ENCODE measurements at regions of chr13 and their contacts with region 1.

Region 1: DNA sequence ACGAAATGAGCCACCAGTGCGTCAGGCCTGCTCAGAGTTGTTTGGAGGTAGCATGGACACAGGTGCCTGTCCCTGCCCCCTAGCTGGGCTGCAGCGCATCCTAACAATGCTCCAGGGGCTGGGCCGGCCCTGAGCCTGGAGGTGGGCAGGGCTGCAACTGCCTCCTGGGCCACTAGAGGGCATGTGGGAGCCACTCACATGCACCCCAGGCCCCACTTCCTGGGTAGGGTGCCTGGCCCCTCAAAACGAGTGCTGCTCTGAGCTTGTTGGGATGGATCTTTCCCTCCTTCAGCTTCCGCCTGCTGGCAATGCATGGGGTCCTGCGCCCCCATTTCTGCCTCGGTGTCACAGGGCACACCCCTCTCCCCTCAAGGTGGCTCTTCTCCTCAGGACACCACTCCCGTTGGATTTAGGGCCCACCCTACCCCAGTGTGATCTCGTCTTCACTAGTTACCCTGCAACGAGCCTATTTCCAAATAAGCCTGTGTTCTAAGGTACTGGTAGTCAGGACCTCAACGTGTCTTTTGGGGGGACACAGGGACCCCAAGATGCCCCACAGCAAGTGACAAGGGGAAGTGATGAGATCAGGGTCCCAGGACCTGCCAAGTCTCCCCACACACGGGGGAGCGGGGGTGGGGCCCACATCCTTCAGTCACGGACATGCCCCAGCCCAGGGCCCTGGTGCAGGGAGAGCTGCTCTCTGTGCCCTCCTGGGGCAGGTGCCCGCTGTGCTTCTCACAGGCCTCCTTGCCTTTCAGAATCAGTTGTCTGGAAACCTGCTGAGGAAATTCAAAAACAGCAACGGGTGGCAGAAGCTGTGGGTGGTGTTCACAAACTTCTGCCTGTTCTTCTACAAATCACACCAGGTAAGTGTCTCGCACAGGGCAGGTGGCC is 131.3 kb downstream of the STK24 start:
- DNase-seq: peak; percentile 74 to 76 (median 75)
- ATAC-seq: peak; percentile 84 to 92 (median 90)
- H3K4me3 ChIP-seq: no peak overlapping the region
- H3K27ac ChIP-seq: no peak overlapping the region
- H3K4me1 ChIP-seq: no peaks in the 10 kb centered on the region
- H3K27me3 ChIP-seq: no peaks in the 10 kb centered on the region
- CTCF ChIP-seq: peak; percentile 97 to 98 (median 97)
- POLR2A ChIP-seq: no peak

Region 2: GRCh38 chr13:98033277-98034247 is 412.0 kb before region 1 on chr13:
- intact Hi-C with region 1: loop called in 1 of 2 experiments (anchors 10 kb)
- DNase-seq: peak in 1 of 3 donors; percentile 52
- ATAC-seq: peak; percentile 93 to 97 (median 94)
- H3K4me3 ChIP-seq: peak overlapping the region in 2 of 3 donors; percentile 1 to 22
- H3K27ac ChIP-seq: peak overlapping the region in 2 of 3 donors; percentile 4 to 36
- H3K4me1 ChIP-seq: peaks cover 0 to 16% (median 2%) of the 10 kb centered on the region in 4 donors
- H3K27me3 ChIP-seq: no peaks in the 10 kb centered on the region
- CTCF ChIP-seq: peak in 3 of 4 donors; percentile 25 to 41 (median 32)
- POLR2A ChIP-seq: peak; percentile 12

Region 3: DNA sequence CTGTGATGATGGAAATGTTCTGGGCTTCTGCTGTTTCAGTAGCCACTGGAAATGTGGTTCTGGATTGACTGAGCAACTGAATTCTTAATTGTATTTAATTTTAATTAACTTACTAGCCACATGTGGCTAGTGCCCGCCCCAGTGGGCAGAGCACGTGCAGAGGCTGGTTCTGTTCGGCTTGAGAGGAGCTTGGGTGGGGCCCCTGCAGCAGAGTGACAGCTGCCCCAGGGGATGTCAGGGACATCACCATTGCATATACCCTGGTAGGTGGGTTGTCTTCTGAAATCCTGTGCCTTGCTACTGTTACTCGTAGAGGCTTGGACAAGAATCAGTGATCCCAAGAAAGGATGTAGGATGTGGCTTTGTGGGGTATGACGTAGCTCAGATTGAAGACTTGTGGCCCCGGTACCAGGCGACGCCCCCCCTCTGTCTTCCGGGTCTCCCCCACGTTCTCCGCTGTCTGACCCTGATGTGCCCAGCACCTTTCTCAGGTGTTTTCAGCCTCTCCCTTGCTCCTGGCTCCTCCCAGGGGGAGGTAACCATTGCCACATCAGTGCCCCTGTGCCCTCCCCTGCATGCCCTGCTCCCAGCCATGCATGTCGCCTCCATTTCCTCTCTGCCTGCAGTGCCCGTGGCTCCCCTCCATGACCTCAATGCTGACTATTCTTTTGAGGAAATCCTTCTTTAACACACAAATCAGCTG is 166.0 kb before region 1 on chr13:
- intact Hi-C with region 1: no loop called
- DNase-seq: peak in 1 of 3 donors; percentile 28
- ATAC-seq: peak; percentile 42 to 58 (median 50)
- H3K4me3 ChIP-seq: no peak overlapping the region
- H3K27ac ChIP-seq: no peak overlapping the region
- H3K4me1 ChIP-seq: peaks cover 0 to 33% (median 10%) of the 10 kb centered on the region in 4 donors
- H3K27me3 ChIP-seq: no peaks in the 10 kb centered on the region
- CTCF ChIP-seq: no peak
- POLR2A ChIP-seq: no peak

Region 4: GRCh38 chr13:98523455-98524102 is 78.0 kb after region 1 on chr13:
- intact Hi-C with region 1: no loop called
- DNase-seq: no peak
- ATAC-seq: no peak
- H3K4me3 ChIP-seq: no peak overlapping the region
- H3K27ac ChIP-seq: no peak overlapping the region
- H3K4me1 ChIP-seq: peaks cover 0 to 29% (median 11%) of the 10 kb centered on the region in 4 donors
- H3K27me3 ChIP-seq: no peaks in the 10 kb centered on the region
- CTCF ChIP-seq: no peak
- POLR2A ChIP-seq: no peak

Region 5: DNA sequence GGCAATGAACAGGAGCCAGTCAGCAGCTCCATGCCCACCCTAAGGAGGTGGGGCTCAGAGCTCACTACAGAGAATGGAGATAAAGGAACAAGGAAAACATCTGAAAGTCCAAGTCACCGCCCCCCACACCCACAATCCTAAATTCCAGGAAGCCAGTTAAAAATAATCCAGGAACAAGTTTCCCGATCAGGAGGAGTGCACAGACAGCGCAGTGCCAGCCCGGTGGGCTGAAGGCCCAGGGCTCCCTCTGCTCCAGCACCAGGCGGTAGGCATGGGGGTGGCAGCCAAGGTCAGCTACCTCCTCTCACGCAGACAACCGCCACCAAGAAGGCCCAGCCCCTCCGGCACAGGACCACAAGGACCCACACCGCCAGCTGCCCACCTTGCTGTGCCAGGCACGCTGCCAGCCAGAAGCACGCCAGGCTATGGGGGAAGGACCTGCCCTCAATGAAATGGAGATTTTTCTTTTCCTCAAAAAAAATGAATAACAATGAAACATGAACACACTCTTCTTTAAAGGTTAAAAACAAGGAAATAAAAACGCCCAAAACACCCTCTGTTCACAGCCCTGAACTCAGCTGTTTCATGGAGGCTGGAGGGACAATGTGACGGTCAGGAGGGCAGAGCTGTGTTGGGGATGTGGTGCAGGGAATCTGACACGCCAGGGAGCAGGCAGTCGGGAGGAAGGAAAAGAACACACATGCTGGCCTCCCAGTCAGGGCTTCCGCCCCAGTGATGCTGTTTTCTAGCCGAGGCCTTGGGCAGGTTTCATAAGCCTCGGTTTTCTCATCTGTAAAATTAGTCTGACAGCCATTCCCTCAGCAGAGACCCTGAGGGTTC is 120.4 kb after region 1 on chr13:
- intact Hi-C with region 1: no loop called
- DNase-seq: peak in 2 of 3 donors; percentile 76 to 78
- ATAC-seq: peak; percentile 66 to 75 (median 74)
- H3K4me3 ChIP-seq: peak overlapping the region in 1 of 3 donors; percentile 19
- H3K27ac ChIP-seq: peak overlapping the region; percentile 60 to 82 (median 74)
- H3K4me1 ChIP-seq: peaks cover 0 to 55% (median 30%) of the 10 kb centered on the region in 4 donors
- H3K27me3 ChIP-seq: no peaks in the 10 kb centered on the region
- CTCF ChIP-seq: peak in 1 of 4 donors; percentile 17
- POLR2A ChIP-seq: peak; percentile 44

Region 6: GRCh38 chr13:98653463-98653985 is 207.9 kb after region 1 on chr13:
- intact Hi-C with region 1: loop called (anchors 10 kb)
- DNase-seq: peak; percentile 73 to 82 (median 76)
- ATAC-seq: peak; percentile 94 to 97 (median 96)
- H3K4me3 ChIP-seq: no peak overlapping the region
- H3K27ac ChIP-seq: no peak overlapping the region
- H3K4me1 ChIP-seq: peaks cover 0 to 2% (median under 1%) of the 10 kb centered on the region in 4 donors
- H3K27me3 ChIP-seq: no peaks in the 10 kb centered on the region
- CTCF ChIP-seq: peak; percentile 87 to 93 (median 89)
- POLR2A ChIP-seq: no peak

Measured in right lobe of liver (tissue), 6 donors.